Transverse colon (tissue), 4 donors: ENCODE measurements at regions of chr2 and their contacts with region 1.

Region 1: GRCh38 chr2:182784777-182785176 is 68.7 kb downstream of the DNAJC10 start:
- DNase-seq: no peak
- H3K4me3 ChIP-seq: no peak overlapping the region
- H3K27ac ChIP-seq: no peak overlapping the region
- H3K4me1 ChIP-seq: no peaks in the 10 kb centered on the region
- H3K27me3 ChIP-seq: no peaks in the 10 kb centered on the region
- CTCF ChIP-seq: peak; percentile 24 to 48 (median 43)
- EP300 ChIP-seq: no peak
- POLR2A ChIP-seq: no peak

Region 2: GRCh38 chr2:182144777-182145165 is 640.0 kb before region 1 on chr2:
- in situ Hi-C with region 1: no loop called
- intact Hi-C with region 1: no loop called
- DNase-seq: no peak
- H3K4me3 ChIP-seq: no peak overlapping the region
- H3K27ac ChIP-seq: no peak overlapping the region
- H3K4me1 ChIP-seq: no peaks in the 10 kb centered on the region
- H3K27me3 ChIP-seq: no peaks in the 10 kb centered on the region
- CTCF ChIP-seq: no peak
- EP300 ChIP-seq: no peak
- POLR2A ChIP-seq: no peak

Region 3: DNA sequence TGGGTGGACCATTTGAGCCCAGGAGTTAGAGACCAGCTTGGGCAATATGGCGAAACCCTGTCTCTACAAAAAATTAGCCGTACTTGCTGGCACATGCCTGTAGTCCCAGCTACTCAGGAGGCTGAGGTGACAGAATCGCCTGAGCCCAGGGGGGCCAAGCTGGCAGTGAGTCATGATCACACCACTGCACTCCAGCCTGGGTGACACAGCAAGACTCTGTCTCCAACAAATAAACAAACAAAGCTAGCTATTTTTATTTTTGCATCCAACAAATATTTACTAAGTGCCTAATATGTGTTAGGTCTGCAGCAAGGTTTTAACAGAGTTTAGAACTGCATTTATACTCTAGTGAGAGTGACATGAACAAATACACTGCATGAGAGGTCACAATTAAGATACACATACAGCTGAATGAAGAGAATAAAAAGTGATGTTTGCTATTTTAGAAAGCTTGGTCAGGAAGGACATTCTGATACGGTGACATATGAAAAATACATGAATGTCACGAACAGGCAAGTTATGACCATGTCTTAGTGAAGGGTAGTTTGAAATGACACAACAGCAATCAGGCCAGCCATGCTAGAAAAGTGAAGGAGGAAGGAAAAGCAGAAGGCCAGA is 164.9 kb after region 1 on chr2:
- in situ Hi-C with region 1: loop called in 1 of 4 experiments (anchors 25 kb)
- intact Hi-C with region 1: no loop called
- DNase-seq: no peak
- H3K4me3 ChIP-seq: no peak overlapping the region
- H3K27ac ChIP-seq: no peak overlapping the region
- H3K4me1 ChIP-seq: peaks cover 0 to 12% (median 8%) of the 10 kb centered on the region in 4 donors
- H3K27me3 ChIP-seq: no peaks in the 10 kb centered on the region
- CTCF ChIP-seq: no peak
- EP300 ChIP-seq: no peak
- POLR2A ChIP-seq: no peak